ENCODE measurements at regions of chr3 and their contacts with region 1.

Region 1: DNA sequence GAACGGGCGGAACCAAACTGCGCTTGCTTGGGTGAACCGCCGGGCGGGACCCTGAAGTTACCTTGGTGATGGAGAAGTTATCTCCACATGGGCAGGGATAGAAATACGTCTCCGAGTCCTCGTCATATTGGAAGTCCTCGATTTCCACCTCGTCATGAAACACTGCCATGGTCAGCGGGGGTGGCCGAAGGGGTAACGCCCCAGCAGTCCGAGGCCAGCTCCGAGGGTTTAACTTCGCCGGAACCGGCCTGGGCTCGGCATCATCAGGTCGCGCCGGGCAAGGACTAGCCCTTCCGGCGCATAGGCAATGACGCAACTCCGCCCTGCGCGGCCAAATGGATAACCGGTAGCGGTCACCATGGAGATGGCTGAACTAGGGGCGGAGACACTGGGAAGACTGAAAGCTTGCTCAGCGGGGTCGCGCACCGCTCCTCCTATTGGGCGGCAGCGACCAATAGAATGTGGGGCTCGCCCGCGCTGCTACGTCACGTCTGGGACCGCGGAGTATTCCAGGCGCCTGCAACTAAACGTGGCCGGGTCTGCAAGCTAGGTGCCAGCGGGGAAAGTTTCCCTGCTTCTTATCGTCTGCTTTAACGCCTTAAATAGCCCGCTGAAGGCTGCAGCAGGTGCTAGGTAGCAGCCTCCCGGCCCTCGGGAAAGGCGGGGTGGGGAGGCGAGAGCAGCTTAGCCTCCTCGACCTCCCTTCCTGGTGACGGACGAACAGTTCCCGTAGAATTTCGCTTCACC is at the starts of genes DPH3 and OXNAD1:
- DNase-seq: peak; percentile 99
- H3K4me3 Mint-ChIP-seq: peak within 1 kb of the TSS; percentile 96
- H3K27ac Mint-ChIP-seq: peak within 1 kb of the TSS; percentile 93
- H3K4me1 Mint-ChIP-seq: peaks cover 42% of the 10 kb centered on the region
- H3K27me3 Mint-ChIP-seq: no peaks in the 10 kb centered on the region
- total RNA-seq, gene DPH3: 16.7 to 19.8 TPM
- total RNA-seq, gene OXNAD1: 26.9 to 27.1 TPM

Region 2: DNA sequence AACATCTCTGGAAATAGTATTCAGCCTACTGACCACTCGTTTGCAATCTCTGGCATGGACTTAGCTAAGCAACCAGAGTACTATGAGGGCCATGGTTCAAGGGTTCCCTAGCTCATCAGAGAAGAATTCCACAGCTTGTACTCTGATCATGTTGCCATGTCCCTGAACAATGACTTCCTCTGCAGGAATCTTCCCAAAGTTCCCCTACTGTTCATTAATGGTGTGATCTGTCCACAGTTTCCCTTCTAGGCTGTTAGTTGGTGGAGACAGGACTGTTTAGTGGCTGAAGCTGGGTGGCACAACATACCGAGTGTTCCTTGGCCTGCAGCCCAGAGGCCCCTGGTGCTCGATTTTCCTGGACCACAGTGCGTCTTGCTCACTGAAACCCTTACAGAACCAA is 134.8 kb before region 1 on chr3:
- CTCF ChIA-PET with region 1: no interaction called
- POLR2A ChIA-PET with region 1: no interaction called
- DNase-seq: no peak
- H3K4me3 Mint-ChIP-seq: no peak overlapping the region
- H3K27ac Mint-ChIP-seq: no peak overlapping the region
- H3K4me1 Mint-ChIP-seq: no peaks in the 10 kb centered on the region
- H3K27me3 Mint-ChIP-seq: peaks cover 3% of the 10 kb centered on the region

Region 3: GRCh38 chr3:16280671-16281070 is 15.8 kb after region 1 on chr3:
- CTCF ChIA-PET with region 1: interaction called, 35 read pairs
- POLR2A ChIA-PET with region 1: interaction called, 26 read pairs
- DNase-seq: no peak
- H3K4me3 Mint-ChIP-seq: no peak overlapping the region
- H3K27ac Mint-ChIP-seq: no peak overlapping the region
- H3K4me1 Mint-ChIP-seq: peaks cover 16% of the 10 kb centered on the region
- H3K27me3 Mint-ChIP-seq: no peaks in the 10 kb centered on the region

Region 4: DNA sequence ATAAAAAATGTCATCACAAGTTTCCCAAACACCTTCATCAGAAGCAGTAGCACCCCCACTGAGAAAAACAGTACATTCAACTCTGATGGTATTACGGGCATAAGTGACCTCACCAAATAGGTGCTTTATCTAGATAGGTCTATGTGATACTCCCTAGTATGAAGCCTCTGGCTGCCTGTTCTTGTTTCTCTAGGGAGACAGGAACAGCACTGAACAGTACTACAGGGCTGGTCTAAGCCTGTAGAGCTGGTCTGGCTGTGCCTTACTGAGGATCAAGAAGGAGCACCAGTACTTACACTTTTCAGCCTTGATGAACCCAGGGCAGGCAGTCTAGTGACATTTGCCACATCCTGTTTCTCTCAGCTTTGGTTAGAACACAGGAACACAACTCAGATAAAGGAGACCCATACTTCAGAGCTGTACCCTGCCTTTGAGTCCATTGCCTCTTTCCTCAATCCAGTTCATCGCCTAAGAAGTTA is 36.0 kb after region 1 on chr3:
- CTCF ChIA-PET with region 1: interaction called, 15 read pairs
- POLR2A ChIA-PET with region 1: interaction called, 10 read pairs
- DNase-seq: peak; percentile 69
- H3K4me3 Mint-ChIP-seq: peak overlapping the region; percentile 74
- H3K27ac Mint-ChIP-seq: peak overlapping the region; percentile 94
- H3K4me1 Mint-ChIP-seq: peaks cover 89% of the 10 kb centered on the region
- H3K27me3 Mint-ChIP-seq: no peaks in the 10 kb centered on the region

Region 5: DNA sequence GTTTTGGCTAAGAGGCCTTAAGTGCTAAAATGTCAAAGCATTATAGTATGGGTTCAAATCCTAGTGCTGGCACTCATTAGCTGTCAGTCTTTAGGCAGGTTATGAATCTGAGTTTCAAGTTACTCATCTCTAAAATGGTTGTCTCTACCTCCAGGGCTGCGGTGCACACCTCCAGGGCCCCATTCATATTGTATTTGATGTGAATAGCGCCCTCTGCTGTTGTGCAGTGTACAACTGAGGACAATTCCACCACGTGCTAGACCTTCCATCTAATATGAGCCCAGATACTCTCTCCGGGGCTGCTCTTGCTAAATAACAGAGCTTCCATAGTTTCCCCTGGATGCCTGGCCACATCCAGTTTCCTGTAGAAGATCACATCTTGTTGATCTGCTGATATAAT is 54.4 kb after region 1 on chr3:
- CTCF ChIA-PET with region 1: interaction called, 61 read pairs
- POLR2A ChIA-PET with region 1: interaction called, 5 read pairs
- DNase-seq: peak; percentile 85
- H3K4me3 Mint-ChIP-seq: no peak overlapping the region
- H3K27ac Mint-ChIP-seq: peak overlapping the region; percentile 72
- H3K4me1 Mint-ChIP-seq: peaks cover 58% of the 10 kb centered on the region
- H3K27me3 Mint-ChIP-seq: no peaks in the 10 kb centered on the region

Region 6: DNA sequence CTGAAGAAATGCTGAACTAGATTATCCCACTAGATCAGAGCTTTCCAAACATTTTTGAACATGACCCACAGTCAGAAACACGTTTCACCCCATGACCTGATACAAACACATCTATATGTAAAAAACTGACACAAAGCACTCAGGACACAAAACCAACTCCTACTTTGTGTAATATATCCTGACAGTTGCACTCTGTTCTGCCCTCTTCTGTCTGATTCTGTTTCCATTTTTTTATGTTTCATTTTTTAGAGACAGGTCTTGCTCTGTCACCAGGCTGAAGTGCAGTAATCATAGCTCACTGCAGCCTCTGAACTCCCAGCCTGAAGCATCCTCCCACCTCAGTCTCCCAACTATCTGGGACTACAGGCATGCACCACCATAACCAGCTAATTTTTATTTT is 264.4 kb after region 1 on chr3:
- CTCF ChIA-PET with region 1: interaction called, 12 read pairs
- POLR2A ChIA-PET with region 1: no interaction called
- DNase-seq: no peak
- H3K4me3 Mint-ChIP-seq: no peak overlapping the region
- H3K27ac Mint-ChIP-seq: no peak overlapping the region
- H3K4me1 Mint-ChIP-seq: peaks cover 5% of the 10 kb centered on the region
- H3K27me3 Mint-ChIP-seq: peaks cover 13% of the 10 kb centered on the region